AG04449 (cell line): ENCODE measurements at regions of chr10 and their contacts with region 1.

Region 1: GRCh38 chr10:113441220-113441619 is 111.6 kb upstream of the HABP2 start:
- DNase-seq: no peak
- H3K4me3 ChIP-seq: no peak overlapping the region
- CTCF ChIP-seq: peak; percentile 16

Region 2: GRCh38 chr10:113415246-113415645 is 26.0 kb before region 1 on chr10:
- CTCF ChIA-PET with region 1: no interaction called
- POLR2A ChIA-PET with region 1: no interaction called
- DNase-seq: no peak
- H3K4me3 ChIP-seq: no peak overlapping the region
- CTCF ChIP-seq: no peak

Region 3: DNA sequence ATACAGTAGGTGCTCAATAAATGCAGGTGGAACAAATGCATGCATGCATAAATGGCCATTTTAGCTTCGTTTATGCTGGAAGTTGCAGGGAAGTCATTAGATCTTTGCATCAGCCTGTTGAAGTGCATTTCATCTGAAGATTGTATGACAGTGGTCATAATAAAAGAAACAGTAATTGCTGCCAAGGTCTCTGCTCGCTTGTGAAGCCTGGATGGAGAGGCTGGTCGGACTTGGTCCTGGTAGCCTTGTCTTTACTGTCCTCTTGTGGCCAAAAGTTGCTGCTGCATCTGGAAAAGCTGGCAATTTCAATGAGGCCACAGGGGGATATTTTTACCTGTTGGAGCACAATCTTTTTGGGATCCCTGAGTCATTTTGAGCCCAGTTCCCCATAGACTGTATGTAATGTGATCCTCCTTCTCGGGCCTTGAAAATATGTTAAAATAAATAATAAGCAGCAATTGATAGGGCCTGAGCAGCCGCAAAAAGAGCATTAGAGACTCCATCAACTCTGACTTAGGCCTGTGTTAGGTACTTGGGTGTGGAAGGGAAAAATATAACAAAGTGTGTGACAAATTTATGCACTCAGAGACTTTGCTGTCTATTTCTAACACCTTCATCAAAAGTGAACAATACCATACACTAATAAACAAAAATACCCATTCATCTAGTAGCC is 80.0 kb after region 1 on chr10:
- CTCF ChIA-PET with region 1: interaction called, 42 read pairs
- POLR2A ChIA-PET with region 1: no interaction called
- DNase-seq: peak; percentile 31
- H3K4me3 ChIP-seq: no peak overlapping the region
- CTCF ChIP-seq: peak; percentile 93

Region 4: DNA sequence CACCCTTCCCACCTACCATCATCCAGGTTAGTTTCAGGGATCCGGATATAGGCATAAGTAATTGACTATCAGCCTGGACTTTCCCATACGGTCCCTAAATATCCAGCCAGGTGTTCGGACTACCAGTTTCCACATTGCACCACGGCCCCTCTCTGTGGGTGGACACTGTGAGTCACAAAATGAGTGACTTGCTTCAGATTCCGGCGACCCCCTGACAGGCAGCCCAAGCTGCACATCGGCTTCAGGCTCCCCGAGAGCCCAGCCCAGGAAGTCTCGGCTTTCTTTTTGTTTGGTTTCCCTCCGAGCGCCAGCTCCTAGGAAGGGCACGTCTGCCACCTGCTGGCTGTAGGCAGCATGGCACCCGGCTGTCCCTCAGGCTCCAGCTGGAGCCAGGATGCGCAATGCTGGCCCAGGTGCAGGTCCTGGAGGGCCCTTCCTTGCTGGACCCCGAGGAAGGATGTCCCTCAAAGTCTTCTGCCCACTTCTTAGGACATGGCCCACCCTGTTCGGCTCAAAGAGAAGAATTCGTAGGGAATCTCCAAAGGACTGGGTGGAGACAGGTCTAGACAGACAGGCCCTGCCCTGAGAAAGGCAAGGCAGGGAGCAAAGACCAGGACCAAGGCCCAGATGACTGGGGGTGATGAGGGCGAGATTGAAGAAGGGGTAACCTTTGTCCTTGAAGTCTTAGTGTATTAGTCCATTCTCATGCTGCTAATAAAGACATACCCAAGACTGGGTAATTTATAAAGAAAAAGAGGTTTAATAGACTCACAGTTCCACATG is 122.3 kb after region 1 on chr10:
- CTCF ChIA-PET with region 1: interaction called, 12 read pairs
- POLR2A ChIA-PET with region 1: no interaction called
- DNase-seq: no peak
- H3K4me3 ChIP-seq: peak overlapping the region; percentile 57
- CTCF ChIP-seq: peak; percentile 98